ENCODE measurements at regions of chr16 and their contacts with region 1.

Region 1: DNA sequence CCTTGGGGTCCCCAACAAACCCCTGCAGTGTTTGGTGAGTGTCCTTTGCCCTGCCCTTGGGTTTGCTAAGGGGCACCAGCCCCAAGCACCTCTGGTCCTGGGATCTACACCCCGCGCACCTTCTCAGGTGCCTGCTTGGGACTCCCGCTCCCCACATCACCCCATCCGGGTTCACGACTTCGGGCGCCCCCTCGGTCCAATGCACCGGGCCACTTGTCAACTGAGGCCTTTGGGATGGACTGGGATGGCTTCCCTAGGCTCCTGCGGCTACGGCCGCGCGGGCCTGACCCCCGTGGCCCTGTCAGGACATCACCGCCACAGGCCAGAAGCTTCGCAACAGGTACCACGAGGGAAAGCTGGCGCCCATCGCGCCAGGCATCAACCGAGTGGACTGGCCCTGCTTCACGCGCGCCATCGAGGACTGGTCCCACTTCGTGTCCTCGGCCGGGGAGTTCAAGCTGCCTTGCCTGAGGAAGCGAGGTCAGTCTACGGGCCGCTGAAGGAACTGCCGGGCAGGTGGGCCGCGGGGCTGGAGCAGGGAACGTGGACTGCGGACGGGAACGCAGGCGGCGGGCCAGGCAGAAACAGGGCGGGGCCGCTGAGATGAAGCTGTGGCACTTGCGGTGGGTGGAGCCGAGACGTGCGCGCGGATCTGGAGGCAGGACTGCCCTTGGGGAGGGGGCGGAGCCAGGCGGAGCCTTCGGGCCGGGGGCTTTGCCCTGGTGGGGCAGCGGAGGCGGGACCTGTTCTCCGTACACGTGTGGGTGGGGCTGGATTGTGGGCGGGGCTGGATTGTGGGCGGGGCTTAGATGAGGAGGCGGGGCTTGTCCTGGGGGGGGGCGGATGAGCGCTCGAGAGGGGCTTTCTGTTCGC is 13.6 kb upstream of the CNGB1 start:
- DNase-seq: peak; percentile 67

Region 2: DNA sequence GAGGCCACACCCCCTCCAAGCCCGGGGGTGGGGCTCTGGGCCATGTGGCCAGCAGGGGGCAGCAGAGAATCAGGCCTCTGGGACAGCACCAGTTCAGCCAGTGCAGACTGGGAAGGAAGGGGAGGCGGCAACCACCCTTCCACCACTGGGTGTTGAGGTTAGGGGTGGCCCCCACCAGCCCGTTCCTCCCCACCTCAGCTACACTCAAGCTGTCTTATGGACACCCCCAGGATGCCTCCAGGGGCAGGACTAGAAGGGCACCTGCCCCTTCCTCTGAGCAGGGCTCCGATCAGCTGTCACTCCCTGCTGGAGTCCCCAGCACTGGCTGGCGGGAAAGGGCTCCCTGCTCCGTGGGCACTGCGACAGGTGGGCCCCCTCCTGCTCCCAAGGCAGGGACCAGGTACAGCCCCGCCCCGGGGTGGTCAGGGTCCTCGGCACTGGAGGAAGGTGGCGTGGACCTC is 227.2 kb before region 1 on chr16:
- in situ Hi-C with region 1: loop called (anchors 25 kb)
- DNase-seq: peak; percentile 86